Mammary epithelial cell (primary cell): ENCODE measurements at regions of chr14 and their contacts with region 1.

Region 1: GRCh38 chr14:23605931-23606585 is 27.5 kb upstream of the JPH4 start:
- DNase-seq: peak; percentile 5
- H3K4me3 ChIP-seq: no peak overlapping the region
- H3K27ac ChIP-seq: no peak overlapping the region
- H3K4me1 ChIP-seq: no peaks in the 10 kb centered on the region
- H3K27me3 ChIP-seq: no peaks in the 10 kb centered on the region
- CTCF ChIP-seq: no peak

Region 2: GRCh38 chr14:23530375-23531055 is 75.5 kb before region 1 on chr14:
- CTCF ChIA-PET with region 1: no interaction called
- dilution Hi-C with region 1: loop called (anchors 5 kb)
- in situ Hi-C with region 1: no loop called
- intact Hi-C with region 1: no loop called
- DNase-seq: no peak
- H3K4me3 ChIP-seq: no peak overlapping the region
- H3K27ac ChIP-seq: no peak overlapping the region
- H3K4me1 ChIP-seq: no peaks in the 10 kb centered on the region
- H3K27me3 ChIP-seq: no peaks in the 10 kb centered on the region
- CTCF ChIP-seq: no peak

Region 3: DNA sequence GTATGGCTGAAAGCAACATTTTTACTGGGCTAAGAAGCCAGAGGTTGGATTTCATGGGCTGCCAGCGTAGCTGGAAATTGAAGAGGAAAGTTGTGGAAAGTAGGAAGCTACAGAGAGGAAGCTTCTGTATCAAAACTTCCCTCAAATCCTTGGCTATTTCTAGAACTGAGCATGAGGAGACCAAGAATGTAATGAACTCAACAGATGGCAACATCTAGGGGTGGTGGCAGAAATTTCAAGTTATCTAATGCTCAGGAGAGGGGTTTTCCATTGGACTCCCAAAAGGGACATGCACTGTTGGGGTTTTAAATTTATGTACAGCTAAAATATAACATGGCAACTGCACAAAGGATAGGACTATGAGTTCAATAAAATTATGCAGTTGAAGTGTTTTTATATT is 181.4 kb after region 1 on chr14:
- CTCF ChIA-PET with region 1: no interaction called
- dilution Hi-C with region 1: no loop called
- in situ Hi-C with region 1: no loop called
- intact Hi-C with region 1: no loop called
- DNase-seq: no peak
- H3K4me3 ChIP-seq: no peak overlapping the region
- H3K27ac ChIP-seq: no peak overlapping the region
- H3K4me1 ChIP-seq: no peaks in the 10 kb centered on the region
- H3K27me3 ChIP-seq: no peaks in the 10 kb centered on the region
- CTCF ChIP-seq: no peak